CD8-positive, alpha-beta T cell (primary cell): ENCODE measurements at regions of chr11 and their contacts with region 1.

Region 1: DNA sequence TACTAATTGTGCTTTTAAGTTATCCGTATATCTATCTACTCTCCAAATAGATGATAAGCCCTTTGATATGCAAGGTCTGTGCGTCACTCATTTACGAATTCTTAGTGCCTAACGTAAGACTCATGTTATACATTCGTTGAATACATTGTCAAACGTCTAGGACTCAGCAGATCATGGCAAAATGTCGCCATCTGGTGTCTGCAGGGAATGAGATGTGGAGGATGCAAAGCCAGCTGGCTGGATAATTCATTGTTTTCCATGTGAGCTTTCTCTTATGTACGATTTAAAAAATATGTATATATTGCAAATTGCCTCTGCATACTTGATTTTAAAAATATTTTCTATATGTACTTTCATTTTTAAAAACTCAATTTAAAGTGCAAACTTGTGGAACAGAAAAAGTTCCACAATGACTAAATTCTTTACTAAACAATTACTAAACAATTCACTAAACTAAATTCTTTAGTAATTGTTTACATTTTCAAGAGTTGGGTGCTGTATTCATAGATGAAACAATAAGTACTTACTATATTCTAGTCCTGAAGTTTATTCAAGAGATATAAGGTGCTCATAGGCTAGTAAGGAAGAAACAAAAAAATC is 33.8 kb downstream of the ZNF202 start:
- DNase-seq: peak; percentile 19 to 73 (median 59)
- ATAC-seq: peak; percentile 49
- H3K4me3 ChIP-seq: no peak overlapping the region
- H3K4me3 Mint-ChIP-seq: no peak overlapping the region
- H3K27ac ChIP-seq: no peak overlapping the region
- H3K27ac Mint-ChIP-seq: no peak overlapping the region
- H3K4me1 ChIP-seq: no peaks in the 10 kb centered on the region
- H3K4me1 Mint-ChIP-seq: no peaks in the 10 kb centered on the region
- H3K27me3 ChIP-seq: no peaks in the 10 kb centered on the region
- H3K27me3 Mint-ChIP-seq: peaks cover 4% of the 10 kb centered on the region
- CTCF ChIP-seq: peak; percentile 73

Region 2: GRCh38 chr11:123110356-123110755 is 597.4 kb before region 1 on chr11:
- CTCF ChIA-PET with region 1: no interaction called
- POLR2A ChIA-PET with region 1: no interaction called
- intact Hi-C with region 1: no loop called
- DNase-seq: peak in 2 of 9 experiments; percentile 22 to 41
- ATAC-seq: no peak
- H3K4me3 ChIP-seq: no peak overlapping the region
- H3K4me3 Mint-ChIP-seq: peak overlapping the region; percentile 62
- H3K27ac ChIP-seq: no peak overlapping the region
- H3K27ac Mint-ChIP-seq: peak overlapping the region; percentile 71
- H3K4me1 ChIP-seq: no peaks in the 10 kb centered on the region
- H3K4me1 Mint-ChIP-seq: peaks cover 4% of the 10 kb centered on the region
- H3K27me3 ChIP-seq: no peaks in the 10 kb centered on the region
- H3K27me3 Mint-ChIP-seq: no peaks in the 10 kb centered on the region
- CTCF ChIP-seq: no peak

Region 3: GRCh38 chr11:123511037-123511870 is 196.5 kb before region 1 on chr11:
- CTCF ChIA-PET with region 1: no interaction called
- POLR2A ChIA-PET with region 1: no interaction called
- intact Hi-C with region 1: loop called (anchors 2 to 5 kb)
- DNase-seq: peak; percentile 20 to 78 (median 56)
- ATAC-seq: peak; percentile 87
- H3K4me3 ChIP-seq: no peak overlapping the region
- H3K4me3 Mint-ChIP-seq: no peak overlapping the region
- H3K27ac ChIP-seq: no peak overlapping the region
- H3K27ac Mint-ChIP-seq: no peak overlapping the region
- H3K4me1 ChIP-seq: no peaks in the 10 kb centered on the region
- H3K4me1 Mint-ChIP-seq: peaks cover 6% of the 10 kb centered on the region
- H3K27me3 ChIP-seq: no peaks in the 10 kb centered on the region
- H3K27me3 Mint-ChIP-seq: no peaks in the 10 kb centered on the region
- CTCF ChIP-seq: peak; percentile 86

Region 4: GRCh38 chr11:123580557-123581275 is 127.0 kb before region 1 on chr11:
- CTCF ChIA-PET with region 1: interaction called, 23 read pairs
- POLR2A ChIA-PET with region 1: no interaction called
- intact Hi-C with region 1: loop called in 1 of 2 experiments (anchors 2 kb)
- DNase-seq: peak; percentile 24 to 78 (median 62)
- ATAC-seq: peak; percentile 96
- H3K4me3 ChIP-seq: no peak overlapping the region
- H3K4me3 Mint-ChIP-seq: no peak overlapping the region
- H3K27ac ChIP-seq: no peak overlapping the region
- H3K27ac Mint-ChIP-seq: no peak overlapping the region
- H3K4me1 ChIP-seq: peaks cover 8% of the 10 kb centered on the region
- H3K4me1 Mint-ChIP-seq: peaks cover 18% of the 10 kb centered on the region
- H3K27me3 ChIP-seq: no peaks in the 10 kb centered on the region
- H3K27me3 Mint-ChIP-seq: no peaks in the 10 kb centered on the region
- CTCF ChIP-seq: peak; percentile 90

Region 5: DNA sequence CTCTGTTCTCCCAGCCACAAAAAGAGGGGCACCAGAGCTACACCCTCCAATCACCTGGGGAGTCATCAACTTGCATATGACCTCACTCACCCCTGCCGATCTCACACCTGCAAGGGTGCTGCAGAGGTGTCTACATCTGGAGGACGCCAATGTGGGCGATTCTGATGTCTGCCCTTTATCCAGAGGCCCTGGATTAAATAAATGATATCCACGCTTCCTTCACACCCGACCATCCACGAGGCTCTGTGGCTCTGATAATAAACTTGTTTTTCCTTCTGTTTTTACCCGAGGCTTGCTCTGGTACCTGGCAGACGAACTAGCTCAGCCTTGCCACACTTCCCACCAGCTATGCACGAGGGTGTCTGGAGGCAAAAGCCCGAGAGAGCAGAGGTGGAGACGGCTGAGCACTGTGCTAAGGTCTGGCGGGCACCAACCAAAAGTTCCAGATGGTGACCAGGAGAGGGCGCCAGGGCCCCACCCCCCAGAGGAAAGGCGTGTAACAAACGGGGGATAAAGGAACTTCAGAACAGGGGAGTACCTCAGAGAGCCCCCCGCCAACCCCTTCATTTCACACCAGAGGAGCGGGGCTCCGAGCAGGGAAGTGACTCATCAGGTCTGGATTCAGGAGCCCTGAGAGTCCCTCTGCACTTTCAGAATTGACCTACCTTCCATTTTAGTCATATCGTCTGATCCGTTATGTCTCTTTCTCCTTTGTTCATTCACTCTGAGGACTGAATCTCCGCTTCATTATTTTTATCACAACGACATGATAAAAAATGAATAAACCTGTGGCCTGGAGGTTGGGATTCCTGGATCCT is 66.8 kb before region 1 on chr11:
- CTCF ChIA-PET with region 1: interaction called, 136 read pairs
- POLR2A ChIA-PET with region 1: no interaction called
- intact Hi-C with region 1: loop called in 1 of 2 experiments (anchors 1 kb)
- DNase-seq: peak; percentile 3 to 68 (median 36)
- ATAC-seq: peak; percentile 56
- H3K4me3 ChIP-seq: no peak overlapping the region
- H3K4me3 Mint-ChIP-seq: no peak overlapping the region
- H3K27ac ChIP-seq: no peak overlapping the region
- H3K27ac Mint-ChIP-seq: no peak overlapping the region
- H3K4me1 ChIP-seq: no peaks in the 10 kb centered on the region
- H3K4me1 Mint-ChIP-seq: peaks cover 3% of the 10 kb centered on the region
- H3K27me3 ChIP-seq: peaks cover 0 to 4% of the 10 kb centered on the region in 2 experiments
- H3K27me3 Mint-ChIP-seq: peaks cover 31% of the 10 kb centered on the region
- CTCF ChIP-seq: peak; percentile 75

Region 6: GRCh38 chr11:123653483-123653996 is 54.2 kb before region 1 on chr11:
- CTCF ChIA-PET with region 1: interaction called, 13 read pairs
- POLR2A ChIA-PET with region 1: interaction called, 4 read pairs
- intact Hi-C with region 1: no loop called
- DNase-seq: no peak
- ATAC-seq: no peak
- H3K4me3 ChIP-seq: peak overlapping the region in 1 of 2 experiments; percentile 45
- H3K4me3 Mint-ChIP-seq: peak overlapping the region; percentile 53
- H3K27ac ChIP-seq: no peak overlapping the region
- H3K27ac Mint-ChIP-seq: no peak overlapping the region
- H3K4me1 ChIP-seq: peaks cover 13% of the 10 kb centered on the region
- H3K4me1 Mint-ChIP-seq: peaks cover 12% of the 10 kb centered on the region
- H3K27me3 ChIP-seq: peaks cover 8 to 25% of the 10 kb centered on the region in 2 experiments
- H3K27me3 Mint-ChIP-seq: peaks cover 42% of the 10 kb centered on the region
- CTCF ChIP-seq: no peak

Region 7: DNA sequence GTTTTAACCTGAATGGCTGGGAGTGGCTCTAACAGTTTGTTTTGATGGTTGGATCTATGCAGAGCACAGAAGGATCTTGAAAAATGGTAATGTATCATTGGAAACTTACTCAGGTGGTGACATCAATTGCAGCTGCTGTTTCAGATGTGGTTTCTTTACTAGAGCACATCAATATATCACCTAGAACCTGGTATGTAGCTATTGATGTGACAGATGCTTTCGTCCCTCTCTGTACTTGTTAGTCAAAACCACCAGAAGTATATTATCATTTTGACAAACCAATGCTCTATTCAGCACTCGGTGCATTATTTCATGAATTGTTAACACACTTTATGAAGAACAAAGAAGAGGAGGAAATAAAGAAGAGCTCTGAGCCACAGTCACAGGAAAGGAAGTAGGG is 26.7 kb before region 1 on chr11:
- CTCF ChIA-PET with region 1: interaction called, 10 read pairs
- POLR2A ChIA-PET with region 1: no interaction called
- intact Hi-C with region 1: no loop called
- DNase-seq: peak in 4 of 9 experiments; percentile 6 to 81 (median 40)
- ATAC-seq: peak; percentile 94
- H3K4me3 ChIP-seq: no peak overlapping the region
- H3K4me3 Mint-ChIP-seq: peak overlapping the region; percentile 2
- H3K27ac ChIP-seq: peak overlapping the region in 1 of 2 experiments; percentile 35
- H3K27ac Mint-ChIP-seq: peak overlapping the region; percentile 76
- H3K4me1 ChIP-seq: peaks cover 18% of the 10 kb centered on the region
- H3K4me1 Mint-ChIP-seq: peaks cover 19% of the 10 kb centered on the region
- H3K27me3 ChIP-seq: no peaks in the 10 kb centered on the region
- H3K27me3 Mint-ChIP-seq: peaks cover 2% of the 10 kb centered on the region
- CTCF ChIP-seq: no peak

Region 8: DNA sequence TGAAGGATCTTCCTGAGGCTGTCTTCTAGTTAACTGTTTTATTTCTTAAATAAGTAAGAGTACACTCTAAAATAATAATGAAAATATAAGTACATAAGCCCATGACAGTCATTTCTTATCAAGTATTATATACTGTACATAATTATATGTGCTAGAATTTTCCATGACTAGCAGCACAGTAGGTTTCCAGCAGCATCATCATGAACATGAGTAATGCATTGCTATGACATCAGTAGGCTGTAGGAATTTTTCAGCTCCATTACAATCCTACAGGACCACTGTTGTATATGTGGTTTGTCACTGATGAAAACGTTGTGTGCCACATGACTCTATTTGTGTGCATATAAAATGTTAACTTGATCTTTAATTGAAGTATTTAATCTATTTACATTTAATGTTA is 11.7 kb after region 1 on chr11:
- CTCF ChIA-PET with region 1: interaction called, 12 read pairs
- POLR2A ChIA-PET with region 1: interaction called, 6 read pairs
- intact Hi-C with region 1: no loop called
- DNase-seq: no peak
- ATAC-seq: no peak
- H3K4me3 ChIP-seq: no peak overlapping the region
- H3K4me3 Mint-ChIP-seq: no peak overlapping the region
- H3K27ac ChIP-seq: no peak overlapping the region
- H3K27ac Mint-ChIP-seq: no peak overlapping the region
- H3K4me1 ChIP-seq: no peaks in the 10 kb centered on the region
- H3K4me1 Mint-ChIP-seq: no peaks in the 10 kb centered on the region
- H3K27me3 ChIP-seq: peaks cover 0 to 2% of the 10 kb centered on the region in 2 experiments
- H3K27me3 Mint-ChIP-seq: peaks cover 19% of the 10 kb centered on the region
- CTCF ChIP-seq: no peak